ENCODE measurements at regions of chr6 and their contacts with region 1.

Region 1: GRCh38 chr6:30061092-30061857 is at the start of gene POLR1H:
- DNase-seq: peak; percentile 84
- H3K4me3 Mint-ChIP-seq: peak within 1 kb of the TSS; percentile 98
- H3K27ac Mint-ChIP-seq: peak within 1 kb of the TSS; percentile 99
- H3K4me1 Mint-ChIP-seq: peaks cover 39% of the 10 kb centered on the region
- H3K27me3 Mint-ChIP-seq: no peaks in the 10 kb centered on the region
- total RNA-seq, gene POLR1H: 79.7 and 82.7 TPM in 2 replicates

Region 2: DNA sequence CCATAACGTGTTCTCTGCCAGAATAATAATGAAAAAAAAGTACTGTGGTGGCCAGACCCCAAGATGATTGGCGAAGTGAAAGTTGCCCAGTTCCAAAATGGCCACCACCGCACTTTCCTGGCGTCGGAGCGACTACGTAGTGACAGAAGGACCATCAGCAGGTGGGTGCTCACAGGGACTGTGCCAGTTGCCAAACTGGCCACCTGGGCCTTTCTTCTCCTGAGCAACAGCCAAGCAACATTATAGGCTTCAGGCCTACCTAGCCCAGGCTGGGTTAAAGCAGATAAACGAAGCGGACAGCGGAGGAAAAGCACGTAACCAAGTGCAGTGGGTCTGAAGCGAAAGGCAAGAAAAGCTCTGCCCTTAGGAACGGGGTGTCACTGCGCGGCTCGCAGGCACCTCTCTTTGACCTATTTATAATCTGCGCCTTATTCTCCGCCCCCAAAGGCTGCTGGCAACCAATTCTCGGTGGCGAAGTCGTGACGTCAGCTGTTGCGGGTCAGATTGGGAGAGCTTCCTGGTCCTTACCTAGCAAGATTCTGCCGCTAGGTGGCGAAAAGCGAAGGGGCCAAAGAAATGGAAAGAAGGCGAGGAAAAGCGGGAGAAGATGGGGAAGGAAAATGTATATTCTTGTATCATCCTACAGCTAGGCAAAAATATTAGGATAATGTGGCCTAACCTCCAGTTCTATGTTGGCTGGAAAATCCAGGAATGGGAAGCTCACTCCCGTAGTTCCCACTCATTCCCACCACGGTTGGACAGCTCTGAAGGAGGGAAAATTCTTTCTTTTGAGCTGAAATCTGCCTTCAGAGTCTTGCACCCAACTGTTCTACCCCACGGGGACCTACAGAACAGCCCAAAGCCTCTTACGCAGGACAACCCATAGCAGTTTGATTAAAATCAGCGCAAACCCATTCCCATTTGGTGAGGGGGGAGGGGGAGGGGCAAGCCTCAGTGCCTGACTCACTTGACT is 411.3 kb before region 1 on chr6:
- intact Hi-C with region 1: loop called (anchors 2 kb)
- DNase-seq: peak; percentile 95
- H3K4me3 Mint-ChIP-seq: peak overlapping the region; percentile 89
- H3K27ac Mint-ChIP-seq: peak overlapping the region; percentile 98
- H3K4me1 Mint-ChIP-seq: peaks cover 20% of the 10 kb centered on the region
- H3K27me3 Mint-ChIP-seq: peaks cover 5% of the 10 kb centered on the region

Region 3: GRCh38 chr6:29723262-29723665 is 338.0 kb before region 1 on chr6 and contains the start of gene HLA-F:
- intact Hi-C with region 1: loop called (anchors 5 kb)
- DNase-seq: peak; percentile 85
- H3K4me3 Mint-ChIP-seq: peak within 1 kb of the TSS; percentile 96
- H3K27ac Mint-ChIP-seq: peak within 1 kb of the TSS; percentile 92
- H3K4me1 Mint-ChIP-seq: peaks cover 53% of the 10 kb centered on the region
- H3K27me3 Mint-ChIP-seq: no peaks in the 10 kb centered on the region
- total RNA-seq, gene HLA-F: 293 and 314 TPM in 2 replicates

Region 4: DNA sequence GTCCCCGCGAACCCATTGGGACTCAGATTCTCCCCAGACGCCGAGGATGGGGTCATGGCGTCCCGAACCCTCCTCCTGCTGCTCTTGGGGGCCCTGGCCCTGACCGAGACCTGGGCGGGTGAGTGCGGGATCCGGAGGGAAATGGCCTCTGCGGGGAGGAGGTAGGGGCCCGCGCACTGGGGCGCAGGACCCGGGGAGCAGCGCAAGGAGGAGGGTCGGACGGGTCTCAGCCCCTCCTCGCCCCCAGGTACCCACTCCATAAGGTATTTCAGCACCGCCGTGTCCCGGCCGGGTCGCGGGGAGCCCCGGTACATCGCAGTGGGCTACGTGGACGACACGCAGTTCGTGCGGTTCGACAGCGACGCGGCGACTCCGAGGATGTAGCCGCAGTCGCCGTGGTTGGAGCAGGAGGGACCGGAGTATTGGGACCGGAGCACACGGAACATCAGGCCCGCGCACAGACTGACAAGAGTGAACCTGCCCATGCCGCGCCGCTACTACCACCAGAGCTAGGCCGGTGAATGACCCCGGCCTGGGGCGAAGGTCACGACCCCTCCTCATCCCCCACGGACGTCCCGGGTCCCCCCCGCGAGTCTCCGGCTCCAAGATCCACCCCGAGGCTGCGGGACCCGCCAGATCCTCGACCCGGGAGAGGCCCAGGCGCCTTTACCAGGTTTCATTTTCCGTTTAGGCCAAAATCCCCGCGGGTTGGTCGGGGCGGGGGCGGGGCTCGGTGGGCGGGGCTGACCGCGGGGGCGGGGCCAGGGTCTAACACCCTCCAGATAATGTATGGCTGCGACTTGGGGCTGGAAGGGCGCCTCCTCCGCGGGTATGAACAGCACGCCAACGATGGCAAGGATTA is 134.6 kb before region 1 on chr6:
- intact Hi-C with region 1: loop called (anchors 1 kb)
- DNase-seq: peak; percentile 79
- H3K4me3 Mint-ChIP-seq: peak overlapping the region; percentile 92
- H3K27ac Mint-ChIP-seq: peak overlapping the region; percentile 98
- H3K4me1 Mint-ChIP-seq: peaks cover 51% of the 10 kb centered on the region
- H3K27me3 Mint-ChIP-seq: peaks cover 4% of the 10 kb centered on the region

Region 5: DNA sequence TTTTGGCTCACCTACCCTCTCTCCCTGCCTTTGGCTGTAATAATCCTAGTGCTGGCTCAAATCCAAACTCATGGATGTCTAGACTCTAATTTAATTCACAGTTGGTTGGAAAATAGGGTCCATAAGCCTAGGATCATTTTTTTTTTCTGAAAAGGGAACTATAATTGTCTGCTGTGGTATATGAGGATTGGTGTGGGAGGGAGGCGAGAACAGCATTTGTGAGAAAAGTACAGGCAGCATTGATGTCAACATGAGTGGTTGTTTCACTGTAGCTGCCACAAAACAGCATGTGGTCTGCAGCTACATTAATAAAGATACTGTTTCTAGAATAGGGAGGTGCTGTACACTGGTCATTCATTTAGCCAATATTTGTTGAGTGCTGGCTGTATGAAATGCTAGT is 18.8 kb before region 1 on chr6:
- intact Hi-C with region 1: loop called (anchors 2 kb)
- DNase-seq: no peak
- H3K4me3 Mint-ChIP-seq: peak overlapping the region; percentile 23
- H3K27ac Mint-ChIP-seq: peak overlapping the region; percentile 37
- H3K4me1 Mint-ChIP-seq: peaks cover 24% of the 10 kb centered on the region
- H3K27me3 Mint-ChIP-seq: no peaks in the 10 kb centered on the region